Activated CD4-positive, alpha-beta memory T cell treated with anti-CD3 and anti-CD28 coated beads for 36 hours (primary cell): ENCODE measurements at regions of chr3 and their contacts with region 1.

Region 1: DNA sequence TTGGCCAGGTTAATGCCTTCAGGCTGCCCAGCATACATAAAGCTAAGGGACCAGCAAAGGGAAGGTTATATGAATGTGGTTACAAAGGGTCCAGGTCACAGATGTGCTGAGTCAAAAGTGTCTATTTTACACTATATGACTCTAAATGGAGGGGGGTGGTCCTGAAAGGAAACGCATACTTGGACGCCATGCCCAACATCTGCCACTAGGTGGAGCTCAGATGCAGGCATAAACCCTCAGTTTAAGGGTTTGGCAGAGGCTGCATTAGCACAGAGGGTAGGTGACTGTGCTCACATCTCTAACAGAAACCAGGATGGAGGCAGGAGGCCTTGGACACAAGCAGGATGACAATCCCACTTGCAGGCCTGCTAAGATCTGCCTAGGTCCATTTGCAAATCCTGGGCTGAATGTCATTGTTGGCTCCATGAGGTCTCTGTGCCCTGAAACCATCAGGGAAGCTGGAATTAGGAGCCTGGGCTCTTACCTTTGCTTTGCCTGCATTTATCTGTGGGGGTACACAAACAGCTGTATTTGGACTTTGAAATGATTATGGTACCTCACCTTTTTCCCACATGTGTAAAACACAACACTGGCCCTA is 55.8 kb downstream of the ZNF621 start:
- DNase-seq: peak; percentile 71
- H3K4me3 Mint-ChIP-seq: no peak overlapping the region
- H3K27ac Mint-ChIP-seq: no peak overlapping the region
- H3K4me1 Mint-ChIP-seq: no peaks in the 10 kb centered on the region
- H3K27me3 Mint-ChIP-seq: peaks cover 11% of the 10 kb centered on the region

Region 2: GRCh38 chr3:40329071-40329470 is 251.5 kb before region 1 on chr3:
- CTCF ChIA-PET with region 1: interaction called, 10 read pairs
- POLR2A ChIA-PET with region 1: no interaction called
- intact Hi-C with region 1: loop called (anchors 1 kb)
- DNase-seq: no peak
- H3K4me3 Mint-ChIP-seq: no peak overlapping the region
- H3K27ac Mint-ChIP-seq: no peak overlapping the region
- H3K4me1 Mint-ChIP-seq: peaks cover 3% of the 10 kb centered on the region
- H3K27me3 Mint-ChIP-seq: peaks cover 8% of the 10 kb centered on the region

Region 3: DNA sequence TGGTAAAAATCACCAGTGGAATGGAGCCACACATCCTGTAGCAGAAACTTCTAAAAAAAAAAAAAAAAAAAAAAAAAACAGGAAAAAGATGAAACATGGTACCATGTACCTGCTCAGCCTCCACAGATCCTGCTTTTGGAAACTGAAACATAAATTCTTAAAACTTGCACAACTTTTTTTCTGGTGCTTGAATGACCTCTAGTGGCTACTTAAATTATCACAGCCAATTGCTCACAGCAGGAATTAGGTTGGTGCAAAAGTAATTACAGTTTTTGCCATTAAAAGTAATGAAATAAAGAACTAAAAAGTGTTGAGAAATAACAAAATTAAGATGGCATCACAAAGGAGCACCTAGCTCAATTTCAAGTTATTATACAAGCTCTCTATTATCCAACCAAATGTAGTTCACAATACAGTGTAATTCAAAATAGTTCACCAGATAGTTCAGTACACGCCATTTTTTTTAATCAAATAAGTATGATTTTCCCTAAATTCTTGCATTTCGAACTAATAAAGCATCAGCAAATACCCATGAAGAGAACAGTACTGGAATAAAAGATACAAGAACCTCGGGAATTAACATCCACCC is 1300.7 kb after region 1 on chr3:
- CTCF ChIA-PET with region 1: interaction called, 22 read pairs
- POLR2A ChIA-PET with region 1: no interaction called
- intact Hi-C with region 1: loop called (anchors 1 kb)
- DNase-seq: no peak
- H3K4me3 Mint-ChIP-seq: no peak overlapping the region
- H3K27ac Mint-ChIP-seq: no peak overlapping the region
- H3K4me1 Mint-ChIP-seq: no peaks in the 10 kb centered on the region
- H3K27me3 Mint-ChIP-seq: no peaks in the 10 kb centered on the region